ENCODE measurements at regions of chr10 and their contacts with region 1.

Region 1: DNA sequence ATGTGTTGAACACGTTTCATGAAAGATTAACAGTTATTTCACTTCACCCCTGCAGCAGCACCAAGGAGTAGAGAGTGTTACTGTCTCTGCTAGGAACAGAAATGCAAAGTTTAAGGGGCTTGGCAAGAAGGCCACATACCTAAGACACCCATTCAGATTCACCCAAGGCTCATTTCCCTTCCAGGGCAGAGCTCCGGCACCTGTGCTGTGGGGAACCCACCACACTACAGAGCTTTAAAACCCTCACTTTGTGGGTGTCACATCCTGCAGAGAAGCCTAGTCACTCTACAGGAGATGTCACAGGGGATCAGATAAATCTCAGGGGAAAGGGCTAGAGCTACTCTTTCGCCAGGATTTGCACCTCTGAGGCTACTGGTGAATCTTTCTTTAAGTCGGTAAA is 176.1 kb upstream of the KLF6 start:
- DNase-seq: peak; percentile 89
- ATAC-seq: peak; percentile 98
- H3K4me3 Mint-ChIP-seq: peak overlapping the region; percentile 87
- H3K27ac Mint-ChIP-seq: peak overlapping the region; percentile 96
- H3K4me1 Mint-ChIP-seq: peaks cover 86% of the 10 kb centered on the region
- H3K27me3 Mint-ChIP-seq: no peaks in the 10 kb centered on the region

Region 2: GRCh38 chr10:3805791-3806461 is 155.2 kb before region 1 on chr10:
- CTCF ChIA-PET with region 1: interaction called, 3 read pairs
- POLR2A ChIA-PET with region 1: interaction called, 20 read pairs
- DNase-seq: peak; percentile 62
- ATAC-seq: peak; percentile 6
- H3K4me3 Mint-ChIP-seq: peak overlapping the region; percentile 53
- H3K27ac Mint-ChIP-seq: peak overlapping the region; percentile 98
- H3K4me1 Mint-ChIP-seq: peaks cover 56% of the 10 kb centered on the region
- H3K27me3 Mint-ChIP-seq: no peaks in the 10 kb centered on the region

Region 3: DNA sequence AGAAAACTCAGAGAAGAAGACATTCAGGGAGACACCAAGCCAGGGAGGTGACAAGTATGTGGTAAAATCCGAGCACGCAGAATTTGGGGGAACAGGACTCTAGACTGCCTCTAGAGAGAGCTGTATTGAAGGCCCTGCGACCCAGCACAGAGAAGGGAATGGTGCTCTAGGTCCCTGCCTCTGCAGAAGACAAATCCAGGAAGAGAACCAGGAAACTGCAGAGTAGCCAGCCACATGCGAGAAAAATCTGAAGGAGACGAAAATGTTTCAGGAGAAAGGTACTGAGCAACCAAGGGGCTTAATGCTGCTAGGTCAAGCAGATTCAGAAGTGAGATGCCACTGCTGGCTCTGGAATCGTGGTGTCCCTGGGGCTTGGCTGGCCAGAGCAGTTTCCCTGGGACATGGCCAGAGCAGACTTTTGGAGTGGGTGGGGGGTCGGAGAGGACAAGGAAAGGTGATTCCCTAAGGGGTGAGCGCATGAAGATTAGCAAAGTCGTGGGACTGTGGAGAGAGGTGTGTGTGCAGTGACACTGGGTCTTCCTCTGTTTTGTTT is 18.1 kb before region 1 on chr10:
- CTCF ChIA-PET with region 1: interaction called, 16 read pairs
- POLR2A ChIA-PET with region 1: interaction called, 60 read pairs
- DNase-seq: no peak
- ATAC-seq: no peak
- H3K4me3 Mint-ChIP-seq: no peak overlapping the region
- H3K27ac Mint-ChIP-seq: peak overlapping the region; percentile 83
- H3K4me1 Mint-ChIP-seq: peaks cover 67% of the 10 kb centered on the region
- H3K27me3 Mint-ChIP-seq: no peaks in the 10 kb centered on the region

Region 4: DNA sequence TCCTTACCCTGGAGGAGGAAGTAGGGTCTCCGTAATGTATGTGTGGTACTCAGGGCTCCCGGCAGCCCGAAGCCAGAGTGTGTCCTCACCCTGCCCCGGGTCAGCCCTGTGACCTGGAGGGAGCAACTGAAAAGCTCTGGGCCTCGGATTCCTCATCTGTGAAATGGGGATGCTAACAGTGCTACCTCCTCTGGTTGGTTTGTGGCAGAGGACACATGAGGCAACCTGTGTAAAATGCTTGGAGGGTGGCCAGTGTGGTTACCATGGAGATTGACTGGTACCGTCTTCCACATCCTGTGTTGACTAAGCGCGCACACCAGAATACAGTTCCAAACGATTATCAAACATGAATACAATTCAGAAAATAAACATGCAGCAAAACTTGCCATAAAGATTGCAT is 12.2 kb before region 1 on chr10:
- CTCF ChIA-PET with region 1: interaction called, 16 read pairs
- POLR2A ChIA-PET with region 1: interaction called, 60 read pairs
- DNase-seq: peak; percentile 92
- ATAC-seq: peak; percentile 80
- H3K4me3 Mint-ChIP-seq: peak overlapping the region; percentile 79
- H3K27ac Mint-ChIP-seq: peak overlapping the region; percentile 97
- H3K4me1 Mint-ChIP-seq: peaks cover 88% of the 10 kb centered on the region
- H3K27me3 Mint-ChIP-seq: no peaks in the 10 kb centered on the region

Region 5: GRCh38 chr10:3972460-3973301 is 11.6 kb after region 1 on chr10:
- CTCF ChIA-PET with region 1: interaction called, 41 read pairs
- POLR2A ChIA-PET with region 1: interaction called, 59 read pairs
- DNase-seq: peak; percentile 63
- ATAC-seq: peak; percentile 88
- H3K4me3 Mint-ChIP-seq: peak overlapping the region; percentile 76
- H3K27ac Mint-ChIP-seq: peak overlapping the region; percentile 99
- H3K4me1 Mint-ChIP-seq: peaks cover 61% of the 10 kb centered on the region
- H3K27me3 Mint-ChIP-seq: no peaks in the 10 kb centered on the region

Region 6: GRCh38 chr10:3980660-3981059 is 19.6 kb after region 1 on chr10:
- CTCF ChIA-PET with region 1: interaction called, 10 read pairs
- POLR2A ChIA-PET with region 1: interaction called, 3 read pairs
- DNase-seq: no peak
- ATAC-seq: peak; percentile 53
- H3K4me3 Mint-ChIP-seq: peak overlapping the region; percentile 6
- H3K27ac Mint-ChIP-seq: peak overlapping the region; percentile 84
- H3K4me1 Mint-ChIP-seq: peaks cover 11% of the 10 kb centered on the region
- H3K27me3 Mint-ChIP-seq: no peaks in the 10 kb centered on the region